Panc1 (cell line): ENCODE measurements at regions of chrX and their contacts with region 1.

Region 1: DNA sequence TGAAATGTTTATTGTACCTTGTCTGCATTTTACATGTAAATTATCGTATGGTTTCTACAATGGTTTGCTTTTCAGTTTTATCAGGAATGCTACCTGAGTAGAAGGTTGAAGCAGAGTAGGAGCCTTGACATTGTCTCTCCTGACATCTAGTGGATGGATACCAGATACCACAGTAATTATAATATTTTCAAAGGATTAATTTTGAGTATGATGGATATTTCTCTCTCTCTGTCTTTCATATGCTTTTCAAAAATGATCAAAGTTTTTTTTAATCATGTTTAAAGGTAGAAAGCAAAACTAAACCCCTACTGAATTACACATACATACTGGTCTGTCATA is 109.4 kb upstream of the KLHL13 start:
- DNase-seq: peak; percentile 10
- ATAC-seq: peak; percentile 76; the same call in 1 of the 2 replicates
- H3K4me3 ChIP-seq: no peak overlapping the region
- H3K27ac ChIP-seq: no peak overlapping the region
- H3K4me1 ChIP-seq: no peaks in the 10 kb centered on the region
- H3K27me3 ChIP-seq: no peaks in the 10 kb centered on the region
- CTCF ChIP-seq: peak; percentile 59; the same call in 1 of the 2 replicates

Region 2: GRCh38 chrX:117973110-117973807 is 252.8 kb before region 1 on chrX:
- CTCF ChIA-PET with region 1: interaction called, 12 read pairs
- POLR2A ChIA-PET with region 1: no interaction called
- in situ Hi-C with region 1: no loop called
- intact Hi-C with region 1: no loop called
- DNase-seq: no peak
- ATAC-seq: no peak
- H3K4me3 ChIP-seq: no peak overlapping the region
- H3K27ac ChIP-seq: no peak overlapping the region
- H3K4me1 ChIP-seq: no peaks in the 10 kb centered on the region
- H3K27me3 ChIP-seq: no peaks in the 10 kb centered on the region
- CTCF ChIP-seq: no peak

Region 3: DNA sequence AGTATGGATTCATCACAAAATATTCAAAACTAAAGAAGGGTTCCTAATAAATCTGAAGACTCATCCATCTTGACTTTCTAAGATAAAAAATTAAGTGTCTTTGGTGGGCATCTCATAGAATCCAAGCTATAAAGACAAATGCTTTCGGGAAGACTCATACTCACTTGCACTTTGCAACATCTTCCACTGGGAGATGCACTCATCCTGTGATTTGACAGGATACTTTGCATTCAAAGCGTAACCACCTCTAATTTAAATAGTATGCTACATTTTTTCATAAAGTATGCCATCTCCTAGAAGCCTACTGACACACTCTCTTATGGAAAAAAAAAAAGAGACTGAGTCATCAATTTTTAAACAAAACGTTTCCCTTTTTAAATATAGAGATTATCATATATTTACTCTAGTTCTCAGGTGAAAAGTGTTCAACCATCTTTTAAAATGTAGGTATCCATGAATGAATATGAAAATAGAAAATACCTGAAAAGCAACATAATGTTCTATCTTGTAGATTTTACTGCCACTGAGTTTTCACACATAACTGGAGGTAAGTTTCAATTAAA is 229.1 kb before region 1 on chrX:
- CTCF ChIA-PET with region 1: no interaction called
- POLR2A ChIA-PET with region 1: no interaction called
- in situ Hi-C with region 1: no loop called
- intact Hi-C with region 1: loop called (anchors 5 kb)
- DNase-seq: no peak
- ATAC-seq: no peak
- H3K4me3 ChIP-seq: no peak overlapping the region
- H3K27ac ChIP-seq: no peak overlapping the region
- H3K4me1 ChIP-seq: no peaks in the 10 kb centered on the region
- H3K27me3 ChIP-seq: no peaks in the 10 kb centered on the region
- CTCF ChIP-seq: peak; percentile 58; the same call in 1 of the 2 replicates